ENCODE measurements at regions of chr1 and their contacts with region 1.

Region 1: GRCh38 chr1:8873506-8874229 is 4.8 kb downstream of the ENO1 start:
- DNase-seq: peak; percentile 93
- H3K4me3 ChIP-seq: no peak overlapping the region
- H3K27me3 ChIP-seq: no peaks in the 10 kb centered on the region
- CTCF ChIP-seq: no peak

Region 2: DNA sequence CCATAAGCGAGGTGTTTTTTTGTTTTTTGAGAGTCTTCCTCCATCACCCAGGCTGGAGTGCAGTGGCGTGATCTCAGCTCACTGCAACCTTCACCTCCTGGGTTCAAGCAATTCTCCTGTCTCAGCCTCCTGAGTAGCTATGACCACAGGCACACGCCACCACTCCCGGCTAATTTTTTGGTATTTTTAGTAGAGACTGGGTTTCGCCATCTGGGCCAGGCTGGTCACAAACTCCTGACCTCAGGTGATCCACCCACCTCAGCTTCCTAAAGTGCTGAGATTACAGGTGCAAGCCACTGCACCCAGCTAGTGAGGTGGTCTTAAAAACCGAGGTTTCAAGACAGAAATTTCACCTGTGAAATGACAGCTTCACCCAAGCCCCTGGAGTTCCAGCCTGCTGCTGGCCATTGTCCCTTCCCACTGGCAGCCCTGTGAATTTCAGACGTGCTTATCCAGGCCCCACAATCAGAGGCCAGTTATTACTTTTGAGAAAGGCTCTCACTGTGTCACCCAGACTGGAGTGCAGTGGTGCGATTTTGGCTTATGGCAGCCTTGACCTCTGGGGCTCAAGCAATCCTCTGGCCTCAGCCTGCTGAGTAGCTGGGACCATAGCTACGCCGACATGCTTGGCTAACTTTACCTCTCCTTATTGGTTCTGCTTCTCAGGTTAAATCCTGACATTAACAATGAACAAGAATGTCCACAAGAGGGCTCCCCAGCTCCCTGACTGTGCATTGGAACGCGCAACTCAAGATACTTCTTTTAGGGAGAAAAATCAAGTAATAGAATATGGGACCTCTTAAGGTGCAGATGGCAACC is 14.6 kb before region 1 on chr1:
- CTCF ChIA-PET with region 1: interaction called, 44 read pairs
- POLR2A ChIA-PET with region 1: interaction called, 4 read pairs
- DNase-seq: no peak
- H3K4me3 ChIP-seq: no peak overlapping the region
- H3K27me3 ChIP-seq: no peaks in the 10 kb centered on the region
- CTCF ChIP-seq: peak; percentile 63